ENCODE measurements at regions of chr1 and their contacts with region 1.

Region 1: GRCh38 chr1:221741711-221742554 is at the start of gene DUSP10:
- DNase-seq: peak; percentile 100
- H3K27ac ChIP-seq: peak within 1 kb of the TSS; percentile 99
- CTCF ChIP-seq: no peak

Region 2: GRCh38 chr1:221478050-221478949 is 263.6 kb before region 1 on chr1:
- CTCF ChIA-PET with region 1: interaction called, 21 read pairs
- POLR2A ChIA-PET with region 1: interaction called, 5 read pairs
- DNase-seq: peak; percentile 89
- H3K27ac ChIP-seq: no peak overlapping the region
- CTCF ChIP-seq: peak; percentile 80

Region 3: DNA sequence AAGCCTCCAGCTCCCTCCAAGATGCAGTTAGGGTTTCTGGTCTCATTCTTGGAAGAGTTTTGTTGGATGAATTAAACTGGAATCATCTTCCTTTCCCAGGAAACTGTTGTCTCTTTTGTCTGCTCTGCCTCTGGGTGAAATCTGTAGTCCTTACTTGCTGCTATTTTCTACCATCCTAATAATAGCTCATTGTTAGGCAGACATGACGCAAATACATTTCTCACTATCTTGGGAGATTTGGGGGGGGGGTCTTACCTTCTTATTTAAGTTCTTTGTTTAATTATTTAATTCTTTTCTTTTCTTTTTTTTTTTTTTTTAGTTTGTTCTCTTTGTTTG is 85.3 kb after region 1 on chr1:
- CTCF ChIA-PET with region 1: no interaction called
- POLR2A ChIA-PET with region 1: interaction called, 12 read pairs
- DNase-seq: no peak
- H3K27ac ChIP-seq: peak overlapping the region; percentile 45
- CTCF ChIP-seq: no peak

Measured in RWPE1 (cell line).